Heart left ventricle (tissue), 16 donors: ENCODE measurements at regions of chr15 and their contacts with region 1.

Region 1: GRCh38 chr15:34342737-34343575 is at the starts of genes NOP10 and NUTM1:
- DNase-seq: peak; percentile 91 to 95 (median 92)
- ATAC-seq: peak; percentile 91 to 97 (median 95)
- H3K4me3 ChIP-seq: peak within 1 kb of the TSS; percentile 56 to 94 (median 84)
- H3K27ac ChIP-seq: peak within 1 kb of the TSS; percentile 60 to 96 (median 90)
- H3K4me1 ChIP-seq: peaks cover 0 to 37% (median 15%) of the 10 kb centered on the region in 12 donors
- H3K27me3 ChIP-seq: no peaks in the 10 kb centered on the region
- CTCF ChIP-seq: peak; percentile 87 to 99 (median 96)
- POLR2A ChIP-seq: peak in 1 of 2 donors; percentile 60
- total RNA-seq, gene NOP10: 96.4 to 217 (median 132) TPM
- total RNA-seq, gene NUTM1: not detected

Region 2: DNA sequence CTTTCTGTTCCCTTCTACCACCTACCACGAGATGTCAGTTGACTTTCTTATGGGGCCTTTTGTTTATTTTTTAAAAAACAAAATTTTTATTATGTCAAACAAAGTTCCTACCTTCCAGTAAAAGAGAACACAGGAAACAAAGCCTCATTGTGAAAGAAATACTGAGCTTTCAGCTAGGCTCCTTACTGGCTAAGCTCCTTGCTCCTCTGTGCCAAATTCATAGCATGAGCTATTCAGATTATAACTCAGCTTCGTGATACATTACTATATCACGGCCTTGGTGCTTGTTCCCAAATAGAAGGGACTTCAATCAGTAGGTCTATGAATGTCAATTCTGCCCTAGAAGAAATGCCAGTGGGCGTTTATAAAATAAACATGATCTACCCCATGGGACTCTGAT is 520.5 kb before region 1 on chr15:
- intact Hi-C with region 1: no loop called
- DNase-seq: no peak
- ATAC-seq: no peak
- H3K4me3 ChIP-seq: no peak overlapping the region
- H3K27ac ChIP-seq: no peak overlapping the region
- H3K4me1 ChIP-seq: no peaks in the 10 kb centered on the region
- H3K27me3 ChIP-seq: no peaks in the 10 kb centered on the region
- CTCF ChIP-seq: no peak
- POLR2A ChIP-seq: no peak

Region 3: DNA sequence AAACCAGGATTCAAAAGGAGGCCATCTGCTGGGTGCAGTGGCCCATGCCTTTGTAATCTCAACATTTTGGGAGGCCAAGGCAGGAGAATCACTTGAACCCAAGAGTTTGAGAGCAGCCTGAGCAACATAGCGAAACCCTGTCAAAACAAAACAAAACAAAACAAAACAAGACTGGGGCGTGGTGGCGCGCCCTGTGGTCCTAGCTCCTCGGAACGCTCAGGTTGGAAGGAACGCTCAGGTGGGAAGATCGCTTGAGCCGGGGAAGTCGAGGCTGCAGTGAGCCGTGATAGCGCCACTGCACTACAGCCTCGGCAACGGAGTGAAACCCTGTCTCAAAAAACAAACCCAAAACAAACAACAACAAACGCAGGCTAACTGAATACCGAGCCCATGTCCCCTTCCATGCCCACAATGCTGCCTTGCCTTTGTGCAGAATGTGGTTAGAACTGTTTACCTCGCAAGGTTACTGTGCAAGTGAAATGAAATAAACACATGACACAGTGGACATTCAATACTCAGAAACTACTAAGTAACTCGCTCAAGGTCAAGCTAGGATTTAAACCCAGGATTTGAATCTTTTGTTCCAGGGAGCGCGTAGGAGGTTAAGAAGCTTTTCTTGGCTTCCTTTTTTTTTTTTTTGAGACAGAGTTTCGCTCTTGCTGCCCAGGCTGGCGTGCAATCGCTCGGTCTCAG is 118.9 kb before region 1 on chr15:
- intact Hi-C with region 1: loop called in 2 of 10 experiments (anchors 5 kb)
- DNase-seq: no peak
- ATAC-seq: peak in 3 of 4 donors; percentile 28 to 38 (median 29)
- H3K4me3 ChIP-seq: peak overlapping the region; percentile 71 to 97 (median 84)
- H3K27ac ChIP-seq: peak overlapping the region; percentile 43 to 99 (median 91)
- H3K4me1 ChIP-seq: peaks cover 0 to 23% (median 16%) of the 10 kb centered on the region in 12 donors
- H3K27me3 ChIP-seq: no peaks in the 10 kb centered on the region
- CTCF ChIP-seq: no peak
- POLR2A ChIP-seq: no peak

Region 4: DNA sequence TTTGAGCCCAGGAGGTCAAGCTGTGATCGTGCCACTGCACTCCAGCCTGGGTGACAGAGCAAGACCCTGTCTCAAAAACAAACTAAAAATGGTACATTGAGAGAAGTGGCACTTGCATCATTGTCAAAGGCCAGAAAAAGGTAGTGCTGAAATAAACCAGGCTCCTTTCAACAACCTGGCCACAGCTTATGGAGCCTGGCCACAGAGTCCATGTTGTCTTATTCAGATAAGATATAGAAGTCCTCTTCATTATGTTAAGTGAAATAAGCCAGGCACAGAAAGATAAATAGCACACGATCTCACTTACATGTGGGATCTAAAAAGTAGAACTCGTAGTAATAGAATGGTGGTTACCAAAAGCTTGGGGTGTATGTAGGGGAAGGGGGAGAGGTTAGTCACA is 83.4 kb before region 1 on chr15:
- intact Hi-C with region 1: loop called in 6 of 10 experiments (anchors 5 to 10 kb)
- DNase-seq: peak in 4 of 5 donors; percentile 42 to 60 (median 50)
- ATAC-seq: peak; percentile 89 to 92 (median 90)
- H3K4me3 ChIP-seq: no peak overlapping the region
- H3K27ac ChIP-seq: peak overlapping the region; percentile 2 to 82 (median 60)
- H3K4me1 ChIP-seq: peaks cover 0 to 23% (median 2%) of the 10 kb centered on the region in 12 donors
- H3K27me3 ChIP-seq: no peaks in the 10 kb centered on the region
- CTCF ChIP-seq: no peak
- POLR2A ChIP-seq: no peak

Region 5: DNA sequence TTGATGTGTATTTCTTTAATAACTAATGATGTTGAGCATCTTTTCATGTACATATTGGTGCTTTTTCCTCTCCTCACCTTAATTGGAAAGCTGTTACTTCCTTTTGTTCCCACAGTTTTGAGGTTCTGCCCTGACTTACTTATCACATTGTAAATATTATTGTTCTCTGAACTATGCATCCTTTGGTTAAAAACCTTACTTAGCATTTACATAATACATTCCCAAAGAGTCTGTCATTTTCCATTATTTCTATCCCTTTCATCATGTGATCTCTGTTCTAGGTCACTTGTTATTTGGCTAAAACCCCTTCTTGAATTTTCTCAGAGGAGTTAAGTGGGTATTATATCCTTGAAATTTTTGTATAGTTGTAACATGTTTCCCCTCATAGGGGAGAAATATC is 38.3 kb before region 1 on chr15:
- intact Hi-C with region 1: no loop called
- DNase-seq: no peak
- ATAC-seq: no peak
- H3K4me3 ChIP-seq: no peak overlapping the region
- H3K27ac ChIP-seq: no peak overlapping the region
- H3K4me1 ChIP-seq: no peaks in the 10 kb centered on the region
- H3K27me3 ChIP-seq: no peaks in the 10 kb centered on the region
- CTCF ChIP-seq: no peak
- POLR2A ChIP-seq: no peak

Region 6: DNA sequence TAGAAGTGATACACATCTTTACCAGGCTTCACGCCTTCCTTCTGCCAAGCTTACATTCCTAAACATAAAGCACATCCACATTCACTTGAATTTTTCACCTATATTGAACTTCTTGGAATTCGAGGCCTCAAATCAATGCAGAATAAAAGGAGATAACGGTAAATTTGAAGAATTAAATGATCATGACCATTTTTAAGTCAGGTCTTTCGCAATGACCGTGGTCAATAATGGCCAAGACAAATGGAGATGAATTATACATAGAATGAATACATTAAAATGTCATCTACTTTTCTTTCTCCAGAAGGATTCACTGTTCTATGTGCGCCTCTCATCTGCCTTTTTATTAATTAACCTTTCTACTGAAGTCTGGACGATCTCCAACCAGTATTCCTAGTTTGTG is 99.9 kb after region 1 on chr15:
- intact Hi-C with region 1: no loop called
- DNase-seq: no peak
- ATAC-seq: no peak
- H3K4me3 ChIP-seq: no peak overlapping the region
- H3K27ac ChIP-seq: no peak overlapping the region
- H3K4me1 ChIP-seq: peaks cover 0 to 3% (median 0%) of the 10 kb centered on the region in 12 donors
- H3K27me3 ChIP-seq: peaks cover 0 to 4% (median 0%) of the 10 kb centered on the region in 9 donors
- CTCF ChIP-seq: no peak
- POLR2A ChIP-seq: no peak

Region 7: DNA sequence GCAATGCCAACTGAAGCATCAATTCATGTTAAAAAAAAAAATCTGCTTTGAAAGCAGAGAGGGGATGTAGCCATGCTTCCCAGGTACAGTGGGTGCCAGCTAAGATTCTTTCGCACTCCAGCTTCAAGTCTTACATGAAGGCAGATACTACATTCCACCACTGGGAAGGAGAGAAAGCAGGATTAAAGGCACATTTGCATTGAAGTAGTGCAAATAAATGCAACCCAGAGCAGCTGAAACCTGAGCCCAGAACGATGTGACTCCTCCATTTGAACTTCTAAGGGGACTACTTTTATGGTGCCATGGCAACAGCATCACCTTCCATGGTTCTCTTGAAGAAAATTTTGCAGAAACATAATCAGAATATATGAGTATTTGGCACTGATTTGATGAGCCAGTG is 431.0 kb after region 1 on chr15:
- intact Hi-C with region 1: no loop called
- DNase-seq: no peak
- ATAC-seq: no peak
- H3K4me3 ChIP-seq: no peak overlapping the region
- H3K27ac ChIP-seq: no peak overlapping the region
- H3K4me1 ChIP-seq: peaks cover 0 to 14% (median 0%) of the 10 kb centered on the region in 12 donors
- H3K27me3 ChIP-seq: peaks cover 0 to 2% (median 0%) of the 10 kb centered on the region in 9 donors
- CTCF ChIP-seq: no peak
- POLR2A ChIP-seq: no peak